Lower lobe of right lung (tissue), 2 donors: ENCODE measurements at regions of chr2 and their contacts with region 1.

Region 1: GRCh38 chr2:10832203-10832936 is 19.8 kb upstream of the PDIA6 start:
- DNase-seq: peak; percentile 87
- ATAC-seq: peak; percentile 89 to 90
- H3K4me3 ChIP-seq: no peak overlapping the region
- H3K27ac ChIP-seq: no peak overlapping the region
- H3K4me1 ChIP-seq: peaks cover 6% of the 10 kb centered on the region
- H3K27me3 ChIP-seq: peaks cover 48% of the 10 kb centered on the region
- CTCF ChIP-seq: peak; percentile 98

Region 2: DNA sequence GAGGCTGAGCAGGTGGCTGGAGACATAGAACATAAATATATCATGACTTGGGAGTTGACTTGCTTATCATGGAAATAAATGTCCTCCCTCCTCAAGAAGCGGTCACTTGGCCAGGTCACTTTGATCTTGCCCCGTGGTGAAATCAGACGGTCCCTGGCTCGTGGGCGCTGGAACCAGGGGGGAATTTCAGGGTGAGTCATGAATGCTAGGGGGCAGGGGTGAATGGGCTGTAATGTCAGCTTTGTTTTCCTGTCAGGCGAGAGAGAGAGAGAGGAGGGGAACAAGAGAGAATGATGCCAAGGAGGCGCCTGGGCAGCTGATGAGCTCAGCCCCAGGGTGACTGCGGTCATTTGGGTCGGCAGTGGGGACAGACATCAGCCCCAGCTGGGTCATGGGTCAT is 662.1 kb before region 1 on chr2:
- intact Hi-C with region 1: no loop called
- DNase-seq: no peak
- ATAC-seq: peak in 1 of 2 donors; percentile 23
- H3K4me3 ChIP-seq: no peak overlapping the region
- H3K27ac ChIP-seq: no peak overlapping the region
- H3K4me1 ChIP-seq: no peaks in the 10 kb centered on the region
- H3K27me3 ChIP-seq: no peaks in the 10 kb centered on the region
- CTCF ChIP-seq: no peak

Region 3: DNA sequence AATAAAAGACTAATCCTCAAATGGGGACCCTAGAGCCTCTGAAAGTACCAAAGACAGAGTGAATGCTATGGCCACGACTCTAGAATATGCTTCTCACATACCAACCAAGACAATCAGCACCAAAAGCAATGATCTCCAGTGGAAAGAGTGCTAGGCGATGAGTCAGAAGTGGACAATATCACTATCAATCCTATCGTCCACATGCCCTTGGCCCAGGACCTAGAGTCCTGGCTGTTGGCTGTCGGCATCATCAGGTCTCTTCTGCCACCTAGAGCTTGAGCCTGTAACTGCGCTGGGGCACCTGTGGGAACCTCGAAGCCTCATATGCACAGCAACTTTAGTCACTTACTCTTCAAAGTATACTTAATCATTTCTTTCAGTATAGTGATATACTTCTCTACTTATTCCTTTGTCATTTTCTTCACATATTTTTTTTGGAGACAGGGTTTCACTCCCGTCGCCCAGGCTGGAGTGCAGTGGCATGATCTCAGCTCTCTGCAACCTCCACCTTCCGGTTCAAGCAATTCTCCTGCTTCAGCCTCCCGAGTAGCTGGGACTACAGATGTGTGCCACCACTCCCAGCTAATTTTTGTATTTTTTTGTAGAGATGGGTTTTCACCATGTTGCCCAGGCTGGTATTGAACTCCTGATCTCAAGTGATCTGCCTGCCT is 172.3 kb before region 1 on chr2:
- intact Hi-C with region 1: no loop called
- DNase-seq: no peak
- ATAC-seq: peak; percentile 85 to 87
- H3K4me3 ChIP-seq: no peak overlapping the region
- H3K27ac ChIP-seq: no peak overlapping the region
- H3K4me1 ChIP-seq: no peaks in the 10 kb centered on the region
- H3K27me3 ChIP-seq: no peaks in the 10 kb centered on the region
- CTCF ChIP-seq: peak; percentile 78

Region 4: DNA sequence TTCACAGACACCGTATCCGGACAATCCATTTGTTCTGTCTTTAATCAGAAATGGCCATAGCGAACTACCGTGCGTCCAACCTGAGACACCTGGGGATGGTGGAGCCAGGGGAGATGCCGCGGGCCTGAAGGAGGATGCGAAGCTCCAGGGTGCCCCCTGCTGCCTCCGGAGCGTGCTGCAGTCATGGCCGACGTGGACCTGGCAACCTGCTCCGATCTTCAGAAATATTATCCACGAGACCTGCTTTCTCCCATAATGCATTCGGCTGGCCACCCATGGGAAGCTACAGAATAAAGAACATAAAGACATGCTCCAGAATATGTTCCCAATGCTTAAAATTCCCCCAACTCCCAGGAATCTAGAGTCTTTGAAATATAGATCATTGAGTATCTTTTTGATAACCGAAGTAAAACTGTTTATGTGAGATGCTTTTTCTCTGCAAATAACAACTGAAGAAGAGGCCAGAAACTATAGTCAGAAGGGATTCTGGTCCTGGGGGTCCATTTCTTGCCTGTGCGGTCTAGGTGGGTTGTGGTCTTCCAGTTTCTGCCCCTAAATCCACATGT is 292.2 kb after region 1 on chr2:
- intact Hi-C with region 1: loop called (anchors 5 kb)
- DNase-seq: peak; percentile 65
- ATAC-seq: peak; percentile 65 to 70
- H3K4me3 ChIP-seq: no peak overlapping the region
- H3K27ac ChIP-seq: no peak overlapping the region
- H3K4me1 ChIP-seq: peaks cover 2% of the 10 kb centered on the region
- H3K27me3 ChIP-seq: peaks cover 7% of the 10 kb centered on the region
- CTCF ChIP-seq: peak; percentile 74